Transverse colon (tissue), 4 donors: ENCODE measurements at regions of chr2 and their contacts with region 1.

Region 1: DNA sequence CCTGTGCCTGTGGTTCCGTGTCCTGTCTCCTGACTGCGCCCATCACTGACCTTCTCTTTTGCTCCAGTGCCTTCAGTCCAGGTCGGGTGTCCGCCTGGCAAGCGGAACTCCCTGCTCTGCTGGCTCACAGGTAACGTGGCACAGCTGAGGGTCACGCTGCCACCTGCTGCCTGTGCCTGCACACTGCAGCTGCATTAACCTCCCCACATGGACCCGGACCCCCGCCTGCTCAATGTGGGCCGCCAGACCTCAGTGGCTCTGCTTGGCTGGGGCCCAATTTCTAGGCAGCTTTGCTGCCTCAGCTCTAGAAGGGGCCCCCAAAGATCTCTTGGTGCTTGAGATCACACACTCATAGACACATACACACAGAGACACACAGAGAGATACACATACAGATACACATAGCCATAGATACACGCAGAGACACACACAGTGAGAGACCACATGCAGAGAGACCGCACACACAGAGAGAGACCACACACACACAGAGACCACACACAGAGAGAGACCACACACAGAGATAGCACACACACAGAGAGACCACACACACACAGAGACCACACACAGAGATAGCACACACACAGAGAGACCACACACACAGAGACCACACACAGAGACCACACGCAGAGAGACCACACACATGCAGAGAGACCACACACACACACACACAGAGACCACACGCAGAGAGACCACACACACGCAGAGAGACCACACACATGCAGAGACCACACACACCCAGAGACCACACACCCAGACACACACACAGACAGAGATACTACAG is 14.9 kb upstream of the CNNM3 start:
- DNase-seq: peak; percentile 85
- H3K4me3 ChIP-seq: no peak overlapping the region
- H3K27ac ChIP-seq: peak overlapping the region; percentile 10 to 41 (median 20)
- H3K4me1 ChIP-seq: peaks cover 0 to 9% (median 5%) of the 10 kb centered on the region in 4 donors
- H3K27me3 ChIP-seq: no peaks in the 10 kb centered on the region
- CTCF ChIP-seq: peak; percentile 79 to 97 (median 90)
- EP300 ChIP-seq: no peak
- POLR2A ChIP-seq: no peak

Region 2: DNA sequence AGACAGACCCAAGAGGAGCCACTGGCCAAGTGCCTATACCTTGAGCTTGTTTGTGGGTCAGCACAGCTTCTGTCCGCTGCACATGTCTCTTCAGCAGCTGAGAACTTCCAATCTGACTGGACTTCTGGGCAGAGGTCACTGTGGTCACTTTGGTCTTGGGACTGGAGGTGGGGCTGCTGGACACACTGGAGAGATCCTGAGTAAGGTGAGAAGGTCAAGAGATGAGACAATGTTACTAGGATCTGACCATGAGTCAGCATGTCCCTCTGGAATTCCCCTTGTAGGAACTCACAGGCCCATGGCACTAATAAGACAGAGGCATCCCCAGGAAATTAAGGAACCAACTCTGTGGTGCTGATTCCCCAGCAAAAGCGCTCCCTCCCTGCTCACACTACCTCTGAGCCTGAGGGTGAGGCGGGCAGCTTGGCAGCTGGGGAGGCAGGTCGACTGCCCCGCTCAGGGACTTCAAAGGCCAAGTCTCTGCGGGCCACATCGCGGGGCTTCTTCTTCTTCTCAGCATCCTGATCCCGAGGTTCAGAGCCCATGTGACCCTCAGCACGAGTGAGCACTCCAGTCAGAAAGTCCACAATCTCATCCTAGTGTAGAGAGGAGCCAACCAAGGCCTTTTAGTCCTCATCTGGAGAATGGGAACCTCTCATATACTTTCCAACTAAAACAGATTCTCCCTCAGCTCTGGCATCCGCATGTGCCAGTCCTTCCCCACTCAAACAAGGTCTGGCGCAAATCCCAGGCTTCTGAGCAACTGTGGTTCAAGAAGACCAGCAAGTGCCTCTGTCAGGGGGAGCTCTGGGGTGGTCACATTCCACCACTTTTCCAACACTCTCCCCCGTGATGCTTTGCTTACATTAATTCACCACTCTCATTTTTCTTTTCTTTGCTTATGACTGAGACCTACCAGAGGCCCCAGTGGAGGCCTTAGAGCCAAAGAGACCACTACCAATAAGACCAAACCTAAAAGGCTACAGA is 192.4 kb before region 1 on chr2:
- in situ Hi-C with region 1: no loop called
- intact Hi-C with region 1: loop called (anchors 5 kb)
- DNase-seq: no peak
- H3K4me3 ChIP-seq: no peak overlapping the region
- H3K27ac ChIP-seq: no peak overlapping the region
- H3K4me1 ChIP-seq: no peaks in the 10 kb centered on the region
- H3K27me3 ChIP-seq: no peaks in the 10 kb centered on the region
- CTCF ChIP-seq: no peak
- EP300 ChIP-seq: no peak
- POLR2A ChIP-seq: no peak